ENCODE measurements at regions of chr21 and their contacts with region 1.

Region 1: GRCh38 chr21:39051588-39051949 is 131.7 kb downstream of the PSMG1 start:
- DNase-seq: no peak
- H3K4me3 ChIP-seq: no peak overlapping the region
- H3K27ac ChIP-seq: no peak overlapping the region
- H3K4me1 ChIP-seq: peaks cover 26% of the 10 kb centered on the region
- H3K27me3 ChIP-seq: no peaks in the 10 kb centered on the region
- CTCF ChIP-seq: no peak
- POLR2A ChIP-seq: no peak

Region 2: GRCh38 chr21:40902299-40902698 is 1850.7 kb after region 1 on chr21:
- intact Hi-C with region 1: loop called (anchors 10 kb)
- DNase-seq: no peak
- H3K4me3 ChIP-seq: no peak overlapping the region
- H3K27ac ChIP-seq: no peak overlapping the region
- H3K4me1 ChIP-seq: no peaks in the 10 kb centered on the region
- H3K27me3 ChIP-seq: no peaks in the 10 kb centered on the region
- CTCF ChIP-seq: no peak
- POLR2A ChIP-seq: no peak